GM12878 (cell line): ENCODE measurements at regions of chr10 and their contacts with region 1.

Region 1: GRCh38 chr10:102835007-102835482 is 2.2 kb downstream of the CYP17A1 start:
- DNase-seq: peak; percentile 20
- ATAC-seq: peak; percentile 100
- H3K4me3 ChIP-seq: no peak overlapping the region
- H3K27ac ChIP-seq: no peak overlapping the region
- H3K4me1 ChIP-seq: no peaks in the 10 kb centered on the region
- H3K27me3 ChIP-seq: 0 out of 4 replicates have a peak, but pooled peaks cover 0 to 2% of the 10 kb centered on the region in 2 experiments
- CTCF ChIP-seq: peak; percentile 81 to 94 (median 89)
- EP300 ChIP-seq: no peak
- POLR2A ChIP-seq: no peak
- RAD21 ChIP-seq: peak; percentile 88

Region 2: GRCh38 chr10:102565793-102566192 is 269.3 kb before region 1 on chr10:
- CTCF ChIA-PET with region 1: no interaction called
- POLR2A ChIA-PET with region 1: no interaction called
- RAD21 ChIA-PET with region 1: no interaction called
- SMC1A ChIA-PET with region 1: no interaction called
- in situ Hi-C with region 1: no loop called
- intact Hi-C with region 1: no loop called
- DNase-seq: no peak
- ATAC-seq: no peak
- H3K4me3 ChIP-seq: no peak overlapping the region
- H3K27ac ChIP-seq: no peak overlapping the region
- H3K4me1 ChIP-seq: peaks cover 15% of the 10 kb centered on the region
- H3K27me3 ChIP-seq: no peaks in the 10 kb centered on the region
- CTCF ChIP-seq: no peak
- EP300 ChIP-seq: no peak
- POLR2A ChIP-seq: no peak
- RAD21 ChIP-seq: no peak

Region 3: GRCh38 chr10:102729029-102730026 is 105.7 kb before region 1 on chr10:
- CTCF ChIA-PET with region 1: interaction called, 4 read pairs
- POLR2A ChIA-PET with region 1: no interaction called
- RAD21 ChIA-PET with region 1: no interaction called
- SMC1A ChIA-PET with region 1: interaction called, 3 read pairs
- in situ Hi-C with region 1: no loop called
- intact Hi-C with region 1: loop called (anchors 5 kb)
- DNase-seq: no peak
- ATAC-seq: peak; percentile 99
- H3K4me3 ChIP-seq: no peak overlapping the region
- H3K27ac ChIP-seq: no peak overlapping the region
- H3K4me1 ChIP-seq: no peaks in the 10 kb centered on the region
- H3K27me3 ChIP-seq: no peaks in the 10 kb centered on the region
- CTCF ChIP-seq: peak; percentile 87 to 92 (median 88)
- EP300 ChIP-seq: no peak
- POLR2A ChIP-seq: no peak
- RAD21 ChIP-seq: peak; percentile 78

Region 4: DNA sequence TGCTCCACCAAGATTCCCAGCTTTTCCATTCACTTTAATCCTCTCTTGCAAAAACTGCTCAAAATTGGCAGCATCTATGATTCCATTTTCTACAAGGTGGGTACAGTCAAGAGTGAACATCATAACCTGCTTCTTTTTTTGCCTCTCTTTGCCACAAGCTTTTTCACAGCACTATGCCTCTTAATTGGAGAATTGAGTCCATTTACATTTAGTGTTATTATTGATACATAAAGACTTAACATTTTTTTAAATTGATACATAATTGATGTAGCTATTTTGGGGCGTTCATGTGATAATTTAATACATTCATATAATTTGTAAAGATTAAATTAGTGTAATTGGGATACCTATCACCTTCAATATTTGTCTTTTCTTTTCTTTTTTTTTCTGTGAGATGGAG is 53.0 kb after region 1 on chr10:
- CTCF ChIA-PET with region 1: no interaction called
- POLR2A ChIA-PET with region 1: no interaction called
- RAD21 ChIA-PET with region 1: no interaction called
- SMC1A ChIA-PET with region 1: no interaction called
- in situ Hi-C with region 1: no loop called
- intact Hi-C with region 1: no loop called
- DNase-seq: no peak
- ATAC-seq: no peak
- H3K4me3 ChIP-seq: no peak overlapping the region
- H3K27ac ChIP-seq: no peak overlapping the region
- H3K4me1 ChIP-seq: no peaks in the 10 kb centered on the region
- H3K27me3 ChIP-seq: no peaks in the 10 kb centered on the region
- CTCF ChIP-seq: no peak
- EP300 ChIP-seq: no peak
- POLR2A ChIP-seq: no peak
- RAD21 ChIP-seq: no peak

Region 5: DNA sequence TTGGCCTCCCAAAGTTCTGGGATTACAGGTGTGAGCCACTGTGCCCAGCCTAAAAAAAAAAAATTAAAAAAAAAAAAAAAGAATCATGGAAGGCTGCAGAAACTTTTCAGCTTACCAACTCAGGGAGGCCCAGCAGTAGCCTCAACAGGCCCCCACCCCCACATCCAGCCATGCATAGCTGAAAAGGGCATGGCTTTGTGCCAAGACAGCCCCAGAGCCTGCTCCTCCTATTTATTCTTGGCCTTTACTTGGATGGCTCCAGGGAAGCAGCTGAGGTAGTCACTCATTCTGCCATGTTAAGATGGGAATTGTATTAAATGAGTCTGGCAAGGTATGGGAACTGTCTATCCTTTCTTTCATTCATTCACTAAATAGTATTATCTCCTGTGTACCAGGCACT is 69.3 kb after region 1 on chr10:
- CTCF ChIA-PET with region 1: interaction called, 88 read pairs
- POLR2A ChIA-PET with region 1: interaction called, 3 read pairs
- RAD21 ChIA-PET with region 1: interaction called, 47 read pairs
- SMC1A ChIA-PET with region 1: interaction called, 65 read pairs
- in situ Hi-C with region 1: loop called (anchors 10 kb)
- intact Hi-C with region 1: loop called (anchors 1 kb)
- DNase-seq: no peak
- ATAC-seq: no peak
- H3K4me3 ChIP-seq: no peak overlapping the region
- H3K27ac ChIP-seq: no peak overlapping the region
- H3K4me1 ChIP-seq: no peaks in the 10 kb centered on the region
- H3K27me3 ChIP-seq: no peaks in the 10 kb centered on the region
- CTCF ChIP-seq: no peak
- EP300 ChIP-seq: no peak
- POLR2A ChIP-seq: no peak
- RAD21 ChIP-seq: no peak

Region 6: GRCh38 chr10:103069453-103070331 is 234.6 kb after region 1 on chr10:
- CTCF ChIA-PET with region 1: interaction called, 9 read pairs
- POLR2A ChIA-PET with region 1: no interaction called
- RAD21 ChIA-PET with region 1: no interaction called
- SMC1A ChIA-PET with region 1: interaction called, 4 read pairs
- in situ Hi-C with region 1: loop called (anchors 5 kb)
- intact Hi-C with region 1: loop called (anchors 2 kb)
- DNase-seq: peak; percentile 46
- ATAC-seq: peak; percentile 87
- H3K4me3 ChIP-seq: 0 out of 2 replicates have a peak overlapping the region, but pooled peaks have one; percentile 2
- H3K27ac ChIP-seq: peak overlapping the region; percentile 73
- H3K4me1 ChIP-seq: peaks cover 37% of the 10 kb centered on the region
- H3K27me3 ChIP-seq: no peaks in the 10 kb centered on the region
- CTCF ChIP-seq: peak; percentile 69 to 82 (median 70)
- EP300 ChIP-seq: no peak
- POLR2A ChIP-seq: no peak
- RAD21 ChIP-seq: peak; percentile 88

Region 7: GRCh38 chr10:103481974-103482531 is 647.0 kb after region 1 on chr10:
- CTCF ChIA-PET with region 1: no interaction called
- POLR2A ChIA-PET with region 1: no interaction called
- RAD21 ChIA-PET with region 1: interaction called, 3 read pairs
- SMC1A ChIA-PET with region 1: interaction called, 3 read pairs
- in situ Hi-C with region 1: no loop called
- intact Hi-C with region 1: loop called (anchors 5 kb)
- DNase-seq: no peak
- ATAC-seq: peak; percentile 93
- H3K4me3 ChIP-seq: no peak overlapping the region
- H3K27ac ChIP-seq: no peak overlapping the region
- H3K4me1 ChIP-seq: no peaks in the 10 kb centered on the region
- H3K27me3 ChIP-seq: no peaks in the 10 kb centered on the region
- CTCF ChIP-seq: peak; percentile 67 to 82 (median 76)
- EP300 ChIP-seq: no peak
- POLR2A ChIP-seq: no peak
- RAD21 ChIP-seq: peak; percentile 83